ENCODE measurements at regions of chr15 and their contacts with region 1.

Region 1: GRCh38 chr15:100349696-100350433 is 8.1 kb upstream of the ADAMTS17 start:
- DNase-seq: peak; percentile 93
- H3K4me3 Mint-ChIP-seq: peak overlapping the region; percentile 88
- H3K27ac Mint-ChIP-seq: peak overlapping the region; percentile 83
- H3K4me1 Mint-ChIP-seq: peaks cover 22% of the 10 kb centered on the region
- H3K27me3 Mint-ChIP-seq: peaks cover 16% of the 10 kb centered on the region

Region 2: DNA sequence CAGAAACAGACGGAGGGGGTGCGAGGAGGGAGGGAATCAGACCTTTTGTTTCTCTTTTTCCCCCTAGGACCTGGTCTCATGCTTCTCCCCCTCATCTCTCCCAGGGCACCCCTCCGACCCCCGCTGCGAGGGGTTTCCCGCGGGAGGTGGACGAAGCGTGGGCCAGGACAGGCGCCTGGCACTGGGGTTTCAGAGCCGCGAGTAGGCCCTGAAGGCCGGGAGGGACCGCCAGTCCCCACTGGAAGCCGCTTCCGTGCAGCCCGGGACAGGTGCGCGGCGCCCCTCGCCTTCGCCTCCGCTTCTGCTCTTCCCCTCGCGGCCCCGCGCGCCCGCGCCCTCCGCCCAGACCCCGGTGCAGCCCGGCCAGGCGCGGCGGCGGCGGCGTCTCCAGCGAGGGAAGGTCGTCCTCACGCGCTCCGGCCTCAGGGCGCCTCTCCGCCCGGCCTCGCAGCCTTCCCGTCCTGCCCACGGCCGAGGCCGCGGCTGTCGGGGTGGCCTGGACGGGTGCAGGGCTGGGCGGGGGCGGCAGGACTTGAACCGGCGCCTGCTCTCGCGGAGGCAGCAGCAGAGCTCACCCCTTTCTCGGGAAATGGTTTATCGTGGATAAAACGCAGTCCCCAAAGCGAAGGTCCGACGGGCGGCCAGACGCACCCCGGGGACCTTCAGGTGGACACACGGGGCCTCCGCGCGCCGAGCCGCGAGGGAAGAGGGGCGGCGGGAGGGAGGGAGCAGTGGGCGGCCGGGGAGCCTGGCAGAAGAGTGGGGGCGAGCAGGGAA is 23.4 kb after region 1 on chr15:
- CTCF ChIA-PET with region 1: no interaction called
- DNase-seq: no peak
- H3K4me3 Mint-ChIP-seq: peak overlapping the region; percentile 5
- H3K27ac Mint-ChIP-seq: no peak overlapping the region
- H3K4me1 Mint-ChIP-seq: peaks cover 7% of the 10 kb centered on the region
- H3K27me3 Mint-ChIP-seq: peaks cover 34% of the 10 kb centered on the region

Region 3: GRCh38 chr15:100383302-100384107 is 33.6 kb after region 1 on chr15:
- CTCF ChIA-PET with region 1: interaction called, 38 read pairs
- DNase-seq: peak; percentile 50
- H3K4me3 Mint-ChIP-seq: no peak overlapping the region
- H3K27ac Mint-ChIP-seq: no peak overlapping the region
- H3K4me1 Mint-ChIP-seq: no peaks in the 10 kb centered on the region
- H3K27me3 Mint-ChIP-seq: peaks cover 8% of the 10 kb centered on the region

Region 4: DNA sequence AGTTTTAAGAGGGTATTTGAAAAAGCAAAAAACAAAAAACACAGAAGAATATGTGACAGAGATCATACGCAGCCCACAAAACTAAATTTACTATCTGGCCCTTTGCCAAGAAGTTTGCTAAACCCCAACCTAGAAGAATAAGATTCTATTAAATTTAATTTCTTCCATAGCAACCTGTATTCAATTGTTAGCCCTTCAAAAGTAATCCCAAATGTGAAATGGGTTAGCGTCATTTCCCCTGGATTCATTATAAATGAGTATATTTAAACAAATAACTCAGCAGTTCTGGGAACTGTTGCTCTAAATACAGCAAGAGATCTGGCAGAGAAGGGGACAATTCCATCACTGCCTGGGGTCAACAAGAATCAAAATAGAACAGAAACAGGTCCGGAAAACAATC is 122.1 kb after region 1 on chr15:
- CTCF ChIA-PET with region 1: no interaction called
- DNase-seq: no peak
- H3K4me3 Mint-ChIP-seq: no peak overlapping the region
- H3K27ac Mint-ChIP-seq: no peak overlapping the region
- H3K4me1 Mint-ChIP-seq: no peaks in the 10 kb centered on the region
- H3K27me3 Mint-ChIP-seq: no peaks in the 10 kb centered on the region

Region 5: DNA sequence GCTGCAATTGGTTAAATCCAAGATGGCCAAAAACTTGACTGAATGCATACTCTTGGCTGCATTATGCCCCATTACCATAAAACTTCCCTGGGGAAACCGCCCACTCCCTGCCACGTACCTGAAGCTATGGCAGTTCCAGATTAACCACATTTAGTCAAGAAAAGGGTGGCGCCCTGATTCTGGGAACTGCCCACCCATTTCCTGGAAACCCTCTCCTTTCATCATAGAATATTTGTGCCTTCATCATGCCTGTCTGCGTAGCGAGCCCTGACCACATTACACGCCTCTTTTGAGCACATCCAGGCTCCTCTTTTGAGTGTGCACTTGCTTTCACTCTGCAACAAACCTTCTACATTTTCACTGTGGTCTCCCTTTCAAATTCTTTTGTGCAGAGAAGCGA is 246.9 kb after region 1 on chr15:
- CTCF ChIA-PET with region 1: interaction called, 16 read pairs
- DNase-seq: peak; percentile 97
- H3K4me3 Mint-ChIP-seq: peak overlapping the region; percentile 76
- H3K27ac Mint-ChIP-seq: peak overlapping the region; percentile 99
- H3K4me1 Mint-ChIP-seq: peaks cover 80% of the 10 kb centered on the region
- H3K27me3 Mint-ChIP-seq: no peaks in the 10 kb centered on the region

Region 6: GRCh38 chr15:100627789-100628395 is 278.0 kb after region 1 on chr15:
- CTCF ChIA-PET with region 1: interaction called, 20 read pairs
- DNase-seq: peak; percentile 74
- H3K4me3 Mint-ChIP-seq: no peak overlapping the region
- H3K27ac Mint-ChIP-seq: no peak overlapping the region
- H3K4me1 Mint-ChIP-seq: peaks cover 6% of the 10 kb centered on the region
- H3K27me3 Mint-ChIP-seq: no peaks in the 10 kb centered on the region

Region 7: DNA sequence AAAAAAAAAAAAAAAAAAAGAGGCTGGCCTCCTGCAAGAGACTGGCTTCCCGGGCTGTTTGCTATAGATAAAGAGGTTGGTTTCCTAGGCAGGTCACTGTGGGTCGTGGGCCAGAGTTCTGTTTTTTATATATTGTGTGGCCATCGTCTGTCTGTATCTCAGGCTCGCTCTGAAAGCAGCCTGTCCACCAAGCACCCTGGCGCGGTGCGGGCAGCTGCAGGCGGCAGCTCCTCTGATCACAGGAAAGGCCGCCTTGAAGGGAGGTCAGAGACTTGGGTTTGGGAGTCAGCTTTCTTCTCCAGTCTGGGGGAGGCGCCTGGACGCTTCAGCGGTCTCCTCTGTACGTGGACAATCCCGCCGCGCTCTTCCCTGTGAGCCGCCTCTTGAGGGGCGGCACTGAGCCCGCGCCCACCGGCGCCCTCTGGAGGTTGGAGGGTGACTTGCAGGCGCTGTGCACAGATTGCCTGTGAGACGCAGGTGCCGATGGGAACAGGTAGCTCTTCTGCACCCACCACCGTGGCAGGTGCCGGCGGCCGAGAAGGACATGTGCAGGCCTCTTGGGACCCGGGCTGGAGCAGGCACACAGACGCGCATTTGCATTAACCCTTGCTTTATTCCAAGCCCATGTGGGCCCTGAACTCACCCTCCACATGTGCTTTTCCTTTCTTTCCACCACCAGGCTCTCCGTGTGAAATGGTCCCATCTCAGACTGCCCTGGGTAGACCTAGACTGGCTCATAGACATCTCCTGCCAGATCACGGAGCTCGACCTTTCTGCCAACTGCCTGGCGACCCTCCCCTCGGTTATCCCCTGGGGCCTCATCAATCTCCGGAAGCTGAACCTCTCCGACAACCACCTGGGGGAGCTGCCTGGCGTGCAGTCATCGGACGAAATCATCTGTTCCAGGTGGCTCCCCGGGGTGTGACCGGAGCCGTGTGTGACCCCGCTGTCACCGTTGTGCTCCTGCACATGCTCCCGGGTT is 658.6 kb after region 1 on chr15:
- CTCF ChIA-PET with region 1: interaction called, 36 read pairs
- DNase-seq: peak; percentile 90
- H3K4me3 Mint-ChIP-seq: peak overlapping the region; percentile 76
- H3K27ac Mint-ChIP-seq: peak overlapping the region; percentile 28
- H3K4me1 Mint-ChIP-seq: peaks cover 22% of the 10 kb centered on the region
- H3K27me3 Mint-ChIP-seq: peaks cover 42% of the 10 kb centered on the region

Measured in activated naive CD4-positive, alpha-beta T cell treated with anti-CD3 and anti-CD28 coated beads, Interleukin-2, amount 10 ng/mL, durations not matched to agents 7 days and 5 days (primary cell).